Transverse colon (tissue), 4 donors: ENCODE measurements at regions of chrX and their contacts with region 1.

Region 1: DNA sequence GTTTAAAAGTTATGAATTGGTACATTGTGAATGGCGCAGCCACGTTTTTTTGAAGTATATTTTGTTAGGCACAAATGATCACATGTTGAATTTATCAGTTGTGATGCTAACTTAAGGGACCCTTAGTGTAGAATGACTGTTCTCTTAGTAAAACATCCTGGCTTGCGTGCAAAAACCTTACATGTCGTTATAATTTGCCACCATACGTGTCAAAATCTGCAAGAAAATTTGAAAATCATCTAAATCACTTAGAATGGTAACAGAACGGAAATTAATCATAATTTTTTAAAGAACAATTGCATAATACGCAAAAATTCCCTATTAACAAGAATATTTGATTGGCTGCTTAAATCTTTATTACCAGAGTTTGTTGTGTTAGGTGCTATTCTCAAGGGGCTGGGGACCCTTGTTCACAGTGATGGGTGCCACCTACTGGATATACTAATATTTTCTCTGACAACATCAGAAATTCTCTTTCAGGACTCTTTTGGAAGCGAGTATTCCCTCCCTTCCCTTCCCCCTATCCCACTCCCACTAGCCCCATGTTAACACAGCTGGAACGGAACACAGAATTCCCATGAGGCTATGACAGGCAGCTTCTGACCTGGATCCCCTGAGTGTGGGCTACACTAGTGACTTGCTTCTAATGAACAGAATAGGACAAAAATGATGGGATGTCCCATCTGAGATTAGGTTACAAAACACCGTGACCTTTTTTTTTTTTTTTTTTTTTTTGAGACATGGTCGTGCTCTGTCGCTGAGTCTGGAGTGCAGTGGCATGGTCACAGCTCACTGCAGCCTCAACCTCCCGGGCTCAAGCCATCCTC is 71.8 kb downstream of the SUPT20HL2 start:
- DNase-seq: no peak
- H3K4me3 ChIP-seq: no peak overlapping the region
- H3K27ac ChIP-seq: peak overlapping the region in 1 of 4 donors; percentile 41
- H3K4me1 ChIP-seq: no peaks in the 10 kb centered on the region
- H3K27me3 ChIP-seq: no peaks in the 10 kb centered on the region
- CTCF ChIP-seq: peak in 4 of 5 experiments; percentile 13 to 37 (median 18)
- EP300 ChIP-seq: no peak
- POLR2A ChIP-seq: no peak

Region 2: DNA sequence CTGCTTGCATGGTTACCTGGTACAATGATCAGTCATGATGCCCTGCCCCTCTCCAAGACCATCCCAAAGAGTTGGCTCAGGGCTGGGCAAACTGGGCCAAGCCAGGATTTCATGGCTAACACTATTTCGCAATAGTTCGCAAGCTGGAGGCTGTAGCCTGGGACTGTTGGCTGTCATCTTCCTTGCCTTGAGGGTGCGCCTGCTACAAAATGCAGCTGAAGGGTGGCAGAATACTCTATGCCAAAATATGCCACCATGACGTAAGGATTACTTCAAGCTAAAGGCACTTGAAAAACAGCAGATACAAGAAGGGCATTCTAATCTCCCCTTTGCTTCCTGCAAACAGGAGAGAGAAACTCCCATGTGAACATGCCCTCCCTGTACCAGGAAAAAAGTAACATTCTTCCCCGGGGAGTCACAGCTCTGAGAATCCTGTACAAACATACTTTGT is 438.1 kb before region 1 on chrX:
- in situ Hi-C with region 1: no loop called
- intact Hi-C with region 1: no loop called
- DNase-seq: peak; percentile 50
- H3K4me3 ChIP-seq: no peak overlapping the region
- H3K27ac ChIP-seq: peak overlapping the region; percentile 69 to 78 (median 75)
- H3K4me1 ChIP-seq: peaks cover 9 to 36% (median 20%) of the 10 kb centered on the region in 4 donors
- H3K27me3 ChIP-seq: no peaks in the 10 kb centered on the region
- CTCF ChIP-seq: no peak
- EP300 ChIP-seq: no peak
- POLR2A ChIP-seq: no peak

Region 3: DNA sequence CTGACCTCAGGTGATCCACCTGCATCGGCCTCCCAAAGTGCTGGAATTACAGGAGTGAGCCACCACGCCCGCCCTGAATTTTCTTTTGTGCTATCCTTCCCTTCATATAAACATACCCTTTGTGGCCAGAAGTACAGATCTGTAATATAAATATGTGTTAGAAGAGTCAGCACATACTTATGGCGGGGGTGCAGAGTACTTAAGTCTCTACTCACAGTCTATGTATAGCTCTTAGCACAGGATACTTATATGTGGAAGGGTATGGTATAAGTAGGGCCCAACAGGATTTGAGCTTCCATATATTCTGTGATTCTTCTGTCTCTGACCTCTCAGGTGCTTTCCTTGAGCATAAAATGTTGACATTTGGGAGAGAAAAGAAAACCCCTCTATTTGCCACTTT is 316.0 kb before region 1 on chrX:
- in situ Hi-C with region 1: no loop called
- intact Hi-C with region 1: no loop called
- DNase-seq: no peak
- H3K4me3 ChIP-seq: no peak overlapping the region
- H3K27ac ChIP-seq: no peak overlapping the region
- H3K4me1 ChIP-seq: no peaks in the 10 kb centered on the region
- H3K27me3 ChIP-seq: no peaks in the 10 kb centered on the region
- CTCF ChIP-seq: no peak
- EP300 ChIP-seq: no peak
- POLR2A ChIP-seq: no peak

Region 4: DNA sequence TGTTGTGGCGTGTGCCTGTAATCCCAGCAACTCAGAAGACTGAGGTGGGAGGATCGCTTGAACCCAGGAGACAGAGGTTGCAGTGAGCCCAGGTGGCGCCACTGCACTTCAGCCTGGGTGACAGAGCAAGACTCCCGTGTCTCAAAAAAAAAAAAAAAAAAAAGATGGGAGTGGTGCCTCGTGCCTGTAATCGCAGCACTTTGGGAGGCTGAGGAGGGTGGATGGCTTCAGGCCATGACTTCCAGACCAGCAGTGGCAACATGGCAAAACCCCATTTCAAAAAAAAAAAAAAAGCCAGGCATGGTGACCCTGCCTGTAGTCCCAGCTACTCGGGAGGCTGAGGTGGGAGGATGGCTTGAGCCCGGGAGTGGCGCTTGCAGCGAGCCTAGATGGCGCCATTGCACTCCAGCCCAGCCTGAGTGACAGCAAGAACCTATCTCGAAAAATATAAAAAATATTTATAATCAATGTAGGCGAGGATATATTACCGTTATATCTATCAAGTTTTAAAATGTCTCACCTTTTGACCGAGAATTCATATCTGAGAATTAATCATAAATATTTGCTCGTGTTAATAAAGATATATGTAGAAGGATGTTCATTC is 160.3 kb before region 1 on chrX:
- in situ Hi-C with region 1: loop called in 3 of 4 experiments (anchors 10 to 25 kb)
- intact Hi-C with region 1: no loop called
- DNase-seq: peak; percentile 64
- H3K4me3 ChIP-seq: no peak overlapping the region
- H3K27ac ChIP-seq: no peak overlapping the region
- H3K4me1 ChIP-seq: no peaks in the 10 kb centered on the region
- H3K27me3 ChIP-seq: no peaks in the 10 kb centered on the region
- CTCF ChIP-seq: peak in 3 of 5 experiments; percentile 13 to 40 (median 25)
- EP300 ChIP-seq: no peak
- POLR2A ChIP-seq: no peak